ENCODE measurements at regions of chr6 and their contacts with region 1.

Region 1: DNA sequence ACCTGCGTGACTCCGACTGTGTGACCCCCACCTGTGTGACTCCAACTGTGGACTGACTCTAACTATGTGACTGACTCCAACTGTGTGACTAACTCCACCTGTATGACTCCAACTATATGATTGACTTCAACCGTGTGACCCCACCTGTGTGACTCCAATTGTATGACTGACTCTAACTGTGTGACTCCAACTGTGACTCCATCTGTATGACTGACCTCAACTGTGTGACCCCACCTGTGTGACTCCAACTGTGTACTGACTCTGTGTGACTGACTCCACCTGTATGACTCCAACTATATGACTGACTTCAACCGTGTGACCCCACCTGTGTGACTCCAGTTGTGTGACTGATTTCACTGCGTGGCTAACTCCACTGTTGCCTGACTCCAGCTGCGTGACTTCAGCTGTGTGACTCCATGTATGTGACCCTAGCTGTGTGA is 38.6 kb downstream of the SYNJ2 start:
- DNase-seq: no peak
- ATAC-seq: no peak

Region 2: GRCh38 chr6:157989541-157990289 is 30.6 kb before region 1 on chr6:
- intact Hi-C with region 1: loop called in 1 of 2 experiments (anchors 5 kb)
- DNase-seq: peak; percentile 78
- ATAC-seq: peak; percentile 79 to 87